Heart right ventricle (tissue), 16 donors: ENCODE measurements at regions of chr4 and their contacts with region 1.

Region 1: GRCh38 chr4:38856524-38857337 is at the start of gene TLR6:
- DNase-seq: peak in 1 of 2 donors; percentile 53
- ATAC-seq: peak in 6 of 8 donors; percentile 36 to 74 (median 58)
- H3K4me3 ChIP-seq: peak within 1 kb of the TSS in 6 of 10 donors; percentile 24 to 53 (median 38)
- H3K27ac ChIP-seq: peak within 1 kb of the TSS in 9 of 10 donors; percentile 5 to 93 (median 47)
- H3K4me1 ChIP-seq: peaks cover 0 to 30% (median 0%) of the 10 kb centered on the region in 9 donors
- H3K27me3 ChIP-seq: no peaks in the 10 kb centered on the region
- CTCF ChIP-seq: peak; percentile 50 to 87 (median 81)
- total RNA-seq, gene TLR6: 0.96 to 3.7 (median 1.3) TPM

Region 2: DNA sequence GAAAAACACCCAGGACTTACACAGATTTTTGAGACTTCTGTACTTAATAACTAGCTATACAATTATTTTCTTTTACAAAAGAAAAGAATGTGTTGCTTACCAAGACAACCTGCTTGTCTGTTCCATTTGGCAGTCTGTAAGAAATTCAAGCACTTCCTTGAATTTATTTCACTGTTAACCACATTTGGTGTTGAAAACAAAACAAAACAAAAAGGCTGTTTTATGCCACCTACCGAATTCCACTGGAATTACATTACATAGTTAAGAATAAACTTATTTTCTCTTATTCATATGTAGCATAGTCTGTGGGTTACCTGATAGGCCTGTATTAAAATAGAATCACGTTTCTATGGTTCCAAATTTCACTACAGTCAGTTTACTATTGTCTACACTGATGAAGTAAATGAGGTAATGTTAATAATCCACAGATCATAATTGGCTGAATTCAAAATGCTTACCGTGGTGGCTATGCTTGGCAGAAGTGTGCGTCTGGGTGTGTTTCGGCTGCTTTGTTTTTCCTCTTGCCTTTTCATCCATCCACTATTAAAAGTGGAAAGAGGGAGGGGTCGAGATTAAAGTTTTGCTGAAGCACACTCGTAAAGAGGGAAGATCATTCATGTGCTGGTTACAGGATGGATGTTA is 52.0 kb before region 1 on chr4 and contains the start of gene TLR1:
- intact Hi-C with region 1: loop called in 1 of 10 experiments (anchors 10 kb)
- DNase-seq: peak in 1 of 2 donors; percentile 19
- ATAC-seq: peak in 7 of 8 donors; percentile 37 to 71 (median 57)
- H3K4me3 ChIP-seq: peak within 1 kb of the TSS in 9 of 10 donors; percentile 4 to 54 (median 40)
- H3K27ac ChIP-seq: peak within 1 kb of the TSS; percentile 4 to 90 (median 64)
- H3K4me1 ChIP-seq: peaks cover 0 to 52% (median 13%) of the 10 kb centered on the region in 9 donors
- H3K27me3 ChIP-seq: no peaks in the 10 kb centered on the region
- CTCF ChIP-seq: peak; percentile 34 to 68 (median 58)
- total RNA-seq, gene TLR1: 0.93 to 14.0 (median 3.1) TPM

Region 3: GRCh38 chr4:39085891-39086290 is 229.2 kb after region 1 on chr4:
- intact Hi-C with region 1: no loop called
- DNase-seq: no peak
- ATAC-seq: no peak
- H3K4me3 ChIP-seq: no peak overlapping the region
- H3K27ac ChIP-seq: no peak overlapping the region
- H3K4me1 ChIP-seq: no peaks in the 10 kb centered on the region
- H3K27me3 ChIP-seq: no peaks in the 10 kb centered on the region
- CTCF ChIP-seq: no peak